ENCODE measurements at regions of chr1 and their contacts with region 1.

Region 1: DNA sequence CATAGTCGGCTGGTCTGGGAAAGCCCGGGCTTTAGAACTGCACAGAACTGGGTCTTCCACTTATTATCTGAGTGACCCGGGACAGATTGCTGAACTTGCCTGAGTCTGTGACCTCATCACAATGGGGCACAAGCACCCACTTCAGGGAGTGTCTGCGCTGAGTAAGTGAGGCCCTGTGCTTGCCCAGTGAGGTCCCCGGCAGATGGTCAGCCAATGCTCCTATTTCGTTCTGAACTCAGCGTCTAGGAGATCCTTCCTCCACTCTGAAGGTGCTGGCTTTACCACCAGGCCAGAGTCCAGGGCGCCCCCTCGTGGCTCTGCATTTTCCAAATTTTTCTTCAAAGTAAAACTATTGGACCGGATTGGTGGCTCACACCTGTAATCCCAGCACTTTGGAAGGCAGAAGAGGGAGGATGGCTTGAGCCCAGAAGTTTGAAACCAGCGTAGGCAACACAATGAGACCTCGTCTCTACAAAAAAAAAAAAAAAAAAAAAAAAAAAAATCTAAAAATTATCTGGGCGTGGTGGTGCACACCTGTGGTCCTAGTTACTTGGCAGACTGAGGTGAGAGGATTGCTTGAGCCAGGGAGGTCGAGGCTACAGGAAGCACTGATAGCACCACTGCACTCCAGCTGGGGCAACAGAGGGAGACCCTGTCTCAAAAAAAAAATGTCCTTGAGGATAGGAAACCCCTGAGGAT is 61.7 kb downstream of the FCRL5 start:
- DNase-seq: peak; percentile 55
- ATAC-seq: peak; percentile 62
- H3K4me3 Mint-ChIP-seq: no peak overlapping the region
- H3K27ac Mint-ChIP-seq: no peak overlapping the region
- H3K4me1 Mint-ChIP-seq: peaks cover 3% of the 10 kb centered on the region
- H3K27me3 Mint-ChIP-seq: no peaks in the 10 kb centered on the region
- CTCF ChIP-seq: no peak

Region 2: DNA sequence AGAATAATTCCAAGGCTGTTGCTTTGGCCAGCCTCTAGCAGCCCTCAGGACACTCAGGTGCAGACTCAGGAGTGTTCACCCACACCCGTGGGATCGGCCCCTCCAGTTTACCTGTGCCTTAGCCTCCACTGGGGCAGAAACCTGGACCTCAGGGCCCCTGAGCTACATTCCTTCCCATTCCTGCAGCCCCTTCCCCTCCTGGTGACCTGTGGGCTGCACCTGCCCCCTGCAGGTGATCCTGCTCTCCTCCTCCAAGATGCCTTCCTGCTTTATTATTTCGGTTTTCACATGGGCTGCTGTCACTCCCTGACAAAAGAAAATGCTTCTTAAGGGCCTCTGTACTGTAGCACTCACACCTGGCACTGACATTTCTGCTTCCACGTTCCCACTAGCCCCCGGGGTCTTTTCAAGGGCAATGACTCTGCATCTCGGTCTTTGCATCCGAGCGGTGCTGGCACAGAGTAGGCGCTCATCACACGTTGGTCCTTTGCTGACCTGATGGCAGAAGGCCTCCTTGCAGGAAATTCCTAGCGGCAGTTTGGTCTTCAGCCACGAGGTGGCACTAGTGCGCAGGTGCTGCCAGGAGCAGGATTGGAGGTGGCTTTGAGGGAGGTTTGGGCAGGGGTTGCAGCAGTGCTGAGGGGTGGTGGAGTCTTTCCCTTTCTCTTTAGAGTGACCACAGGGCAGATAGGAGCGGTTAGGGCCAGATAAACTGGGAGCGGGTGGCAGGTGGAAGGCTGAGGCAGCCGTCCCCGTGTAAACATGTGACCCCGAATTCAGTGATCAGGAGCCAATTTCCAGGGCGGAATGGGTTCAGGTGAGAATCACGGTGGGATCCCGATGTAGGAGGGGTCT is 327.1 kb before region 1 on chr1:
- CTCF ChIA-PET with region 1: no interaction called
- POLR2A ChIA-PET with region 1: no interaction called
- intact Hi-C with region 1: loop called (anchors 2 kb)
- DNase-seq: peak; percentile 76
- ATAC-seq: peak; percentile 62
- H3K4me3 Mint-ChIP-seq: no peak overlapping the region
- H3K27ac Mint-ChIP-seq: no peak overlapping the region
- H3K4me1 Mint-ChIP-seq: no peaks in the 10 kb centered on the region
- H3K27me3 Mint-ChIP-seq: peaks cover 18% of the 10 kb centered on the region
- CTCF ChIP-seq: peak; percentile 89

Region 3: GRCh38 chr1:157193702-157194391 is 296.8 kb before region 1 on chr1:
- CTCF ChIA-PET with region 1: interaction called, 9 read pairs
- POLR2A ChIA-PET with region 1: no interaction called
- intact Hi-C with region 1: loop called (anchors 1 kb)
- DNase-seq: peak; percentile 55
- ATAC-seq: peak; percentile 25
- H3K4me3 Mint-ChIP-seq: no peak overlapping the region
- H3K27ac Mint-ChIP-seq: no peak overlapping the region
- H3K4me1 Mint-ChIP-seq: peaks cover 4% of the 10 kb centered on the region
- H3K27me3 Mint-ChIP-seq: peaks cover 30% of the 10 kb centered on the region
- CTCF ChIP-seq: no peak

Region 4: DNA sequence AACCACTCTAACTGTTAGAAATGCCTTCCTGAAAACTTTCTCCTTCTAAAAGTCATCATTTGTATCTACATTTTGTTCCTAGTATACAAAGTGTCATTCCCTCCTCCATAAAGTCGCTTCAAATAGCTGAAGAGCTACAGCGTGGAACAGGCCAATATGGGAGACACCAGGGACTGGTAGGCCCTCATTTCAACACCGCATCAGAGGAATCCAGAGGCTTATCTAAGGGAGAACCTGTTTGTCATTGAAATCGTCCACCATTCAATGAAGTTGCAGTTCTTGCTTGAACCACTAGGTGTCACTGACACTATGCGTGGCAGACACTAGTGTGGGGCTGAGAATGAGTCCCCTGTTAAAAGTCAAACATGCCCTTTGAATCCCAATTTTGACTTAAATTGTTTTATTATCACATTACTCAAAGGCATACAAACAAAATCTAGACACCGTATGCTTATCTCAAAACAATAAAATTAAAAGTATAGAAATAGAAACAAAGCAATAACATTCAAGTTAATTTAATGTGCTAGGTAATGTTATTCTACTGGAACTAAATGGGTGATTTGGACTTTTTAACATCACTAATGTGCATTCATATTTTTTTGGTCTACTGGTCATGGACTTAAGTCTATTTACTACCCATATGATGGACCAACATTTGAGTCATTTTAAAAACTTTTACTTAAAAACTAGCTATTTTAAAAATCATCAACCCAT is 120.7 kb before region 1 on chr1:
- CTCF ChIA-PET with region 1: interaction called, 8 read pairs
- POLR2A ChIA-PET with region 1: no interaction called
- intact Hi-C with region 1: loop called (anchors 1 kb)
- DNase-seq: no peak
- ATAC-seq: peak; percentile 77
- H3K4me3 Mint-ChIP-seq: no peak overlapping the region
- H3K27ac Mint-ChIP-seq: no peak overlapping the region
- H3K4me1 Mint-ChIP-seq: no peaks in the 10 kb centered on the region
- H3K27me3 Mint-ChIP-seq: no peaks in the 10 kb centered on the region
- CTCF ChIP-seq: peak; percentile 96

Region 5: GRCh38 chr1:157380523-157380922 is 110.1 kb before region 1 on chr1:
- CTCF ChIA-PET with region 1: interaction called, 9 read pairs
- POLR2A ChIA-PET with region 1: no interaction called
- intact Hi-C with region 1: loop called (anchors 1 kb)
- DNase-seq: no peak
- ATAC-seq: no peak
- H3K4me3 Mint-ChIP-seq: no peak overlapping the region
- H3K27ac Mint-ChIP-seq: no peak overlapping the region
- H3K4me1 Mint-ChIP-seq: peaks cover 2% of the 10 kb centered on the region
- H3K27me3 Mint-ChIP-seq: peaks cover 8% of the 10 kb centered on the region
- CTCF ChIP-seq: no peak

Region 6: GRCh38 chr1:157532569-157532968 is 42.0 kb after region 1 on chr1:
- CTCF ChIA-PET with region 1: no interaction called
- POLR2A ChIA-PET with region 1: no interaction called
- intact Hi-C with region 1: no loop called
- DNase-seq: no peak
- ATAC-seq: no peak
- H3K4me3 Mint-ChIP-seq: no peak overlapping the region
- H3K27ac Mint-ChIP-seq: no peak overlapping the region
- H3K4me1 Mint-ChIP-seq: peaks cover 28% of the 10 kb centered on the region
- H3K27me3 Mint-ChIP-seq: no peaks in the 10 kb centered on the region
- CTCF ChIP-seq: no peak

Region 7: DNA sequence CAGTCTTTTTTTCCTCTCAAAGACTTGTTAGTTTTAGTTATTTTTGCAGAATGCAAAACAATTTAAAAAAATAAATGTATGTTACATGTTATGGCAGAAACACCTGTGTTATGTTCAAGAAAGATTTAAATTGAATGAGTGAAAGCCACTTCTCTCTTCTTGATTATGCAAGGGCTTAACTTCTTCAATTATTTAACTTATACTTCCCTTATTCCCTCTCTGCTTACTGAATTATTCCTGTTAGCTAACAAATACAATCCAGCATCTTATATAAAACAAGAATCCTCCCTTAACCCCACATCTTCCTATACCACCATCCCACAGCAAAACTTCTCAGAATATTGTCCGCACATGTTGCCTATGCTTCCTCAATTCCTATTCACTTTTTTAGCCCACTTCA is 1800.8 kb after region 1 on chr1:
- CTCF ChIA-PET with region 1: no interaction called
- POLR2A ChIA-PET with region 1: no interaction called
- intact Hi-C with region 1: no loop called
- DNase-seq: no peak
- ATAC-seq: no peak
- H3K4me3 Mint-ChIP-seq: no peak overlapping the region
- H3K27ac Mint-ChIP-seq: no peak overlapping the region
- H3K4me1 Mint-ChIP-seq: no peaks in the 10 kb centered on the region
- H3K27me3 Mint-ChIP-seq: peaks cover 8% of the 10 kb centered on the region
- CTCF ChIP-seq: no peak

Measured in activated B cell treated with CpG ODN at 0.5 μM for 24 hours (primary cell).